CD4-positive, alpha-beta memory T cell (primary cell): ENCODE measurements at regions of chr17 and their contacts with region 1.

Region 1: DNA sequence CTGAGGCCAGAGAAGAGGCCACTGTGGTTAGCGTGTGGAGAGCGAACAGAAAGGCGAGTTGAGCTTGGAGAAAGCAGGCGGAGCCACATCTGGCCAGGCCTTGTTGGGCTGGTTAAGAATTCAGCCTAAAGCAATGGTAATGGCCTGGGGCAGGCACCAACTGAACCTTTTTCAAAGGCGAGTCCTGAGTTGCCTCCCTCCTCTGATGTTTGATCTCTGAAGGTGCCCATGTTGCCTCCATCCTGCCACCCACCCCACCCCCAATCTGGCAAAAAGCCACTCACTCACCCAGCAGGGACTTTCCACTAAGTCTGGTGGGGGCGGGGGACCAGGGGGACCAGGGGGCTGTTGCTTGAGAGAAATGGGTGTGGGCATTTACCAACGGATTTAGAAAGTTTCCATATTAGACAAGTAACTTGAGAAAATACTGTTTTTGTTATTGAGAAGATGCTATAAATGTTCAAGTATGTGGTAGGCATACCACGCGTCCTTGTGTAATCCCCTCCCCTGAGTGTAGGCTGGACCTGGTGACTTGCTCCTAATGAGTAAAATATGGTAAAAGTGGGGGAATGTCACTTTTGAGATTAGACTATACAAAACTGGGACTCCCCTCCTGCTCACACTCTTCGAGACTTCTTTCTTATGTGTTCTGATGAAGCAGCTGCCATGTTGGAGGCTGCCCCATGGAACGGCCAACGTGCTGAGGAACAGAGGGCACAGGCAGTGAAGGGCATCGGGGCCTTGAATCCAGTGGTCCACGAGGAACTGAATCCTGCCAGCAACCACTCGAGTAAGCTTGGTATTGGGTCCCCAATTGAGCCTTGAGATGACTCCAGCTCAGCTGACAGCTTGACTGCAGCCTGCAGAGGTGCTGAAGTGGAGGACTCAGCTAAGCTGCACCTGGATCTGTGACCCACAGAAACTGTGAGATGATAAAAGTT is 29.9 kb upstream of the TNS4 start:
- DNase-seq: peak; percentile 53 to 85 (median 58)
- H3K4me3 ChIP-seq: no peak overlapping the region
- H3K4me3 Mint-ChIP-seq: peak overlapping the region in 7 of 8 donors; percentile 27 to 75 (median 37)
- H3K27ac ChIP-seq: no peak overlapping the region
- H3K27ac Mint-ChIP-seq: peak overlapping the region; percentile 78 to 100 (median 84)
- H3K4me1 ChIP-seq: peaks cover 77% of the 10 kb centered on the region
- H3K4me1 Mint-ChIP-seq: peaks cover 57 to 82% (median 65%) of the 10 kb centered on the region in 4 donors
- H3K27me3 ChIP-seq: no peaks in the 10 kb centered on the region
- H3K27me3 Mint-ChIP-seq: peaks cover 0 to 2% of the 10 kb centered on the region in 2 donors

Region 2: DNA sequence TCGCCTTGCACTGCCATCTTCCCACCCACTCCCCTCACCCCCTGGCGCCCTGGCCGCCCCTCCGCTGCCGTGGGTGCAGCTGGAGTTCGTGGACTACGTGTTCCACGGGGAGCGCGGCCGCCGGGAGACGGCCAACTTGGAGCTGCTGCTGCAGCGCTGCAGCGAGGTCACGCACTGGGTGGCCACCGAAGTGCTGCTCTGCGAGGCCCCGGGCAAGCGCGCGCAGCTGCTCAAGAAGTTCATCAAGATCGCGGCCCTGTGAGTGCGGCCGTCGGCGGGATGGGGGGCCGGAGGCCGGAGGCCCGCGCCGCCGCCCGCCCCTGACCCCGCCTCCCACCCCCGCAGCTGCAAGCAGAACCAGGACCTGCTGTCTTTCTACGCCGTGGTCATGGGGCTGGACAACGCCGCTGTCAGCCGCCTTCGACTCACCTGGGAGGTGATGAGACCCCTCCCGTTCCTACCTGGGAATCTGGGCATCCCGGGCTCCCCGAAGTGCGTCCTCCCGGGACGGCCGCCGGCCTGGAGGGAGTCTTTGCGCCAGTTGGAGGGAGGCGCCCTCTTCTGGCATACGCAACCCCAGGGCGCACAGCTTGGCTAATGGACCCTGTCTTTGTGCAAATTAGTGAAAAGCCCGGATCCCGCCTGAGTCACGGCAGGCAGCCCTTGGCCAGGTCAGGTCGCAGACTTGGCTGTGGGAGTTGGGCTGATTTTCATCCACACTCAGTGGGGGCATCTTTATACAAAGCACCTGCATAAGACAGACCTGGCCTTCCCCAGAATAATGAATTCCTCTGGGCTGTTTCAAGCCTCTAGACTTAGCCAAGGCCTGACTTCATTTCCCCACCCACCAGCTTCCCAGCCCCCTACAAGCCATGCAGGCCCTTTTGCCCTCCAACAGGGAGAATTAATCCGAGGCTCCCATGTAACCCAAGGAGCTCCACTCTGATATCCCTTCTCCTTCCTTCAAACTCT is 339.8 kb before region 1 on chr17:
- CTCF ChIA-PET with region 1: no interaction called
- POLR2A ChIA-PET with region 1: no interaction called
- intact Hi-C with region 1: no loop called
- DNase-seq: peak; percentile 52 to 67 (median 56)
- H3K4me3 ChIP-seq: peak overlapping the region; percentile 46 to 52
- H3K4me3 Mint-ChIP-seq: peak overlapping the region; percentile 90 to 96 (median 92)
- H3K27ac ChIP-seq: no peak overlapping the region
- H3K27ac Mint-ChIP-seq: peak overlapping the region in 5 of 7 donors; percentile 24 to 84 (median 82)
- H3K4me1 ChIP-seq: peaks cover 6% of the 10 kb centered on the region
- H3K4me1 Mint-ChIP-seq: peaks cover 0 to 11% (median 7%) of the 10 kb centered on the region in 4 donors
- H3K27me3 ChIP-seq: no peaks in the 10 kb centered on the region
- H3K27me3 Mint-ChIP-seq: no peaks in the 10 kb centered on the region

Region 3: GRCh38 chr17:40317880-40318829 is 213.2 kb before region 1 on chr17:
- CTCF ChIA-PET with region 1: no interaction called
- POLR2A ChIA-PET with region 1: interaction called, 12 read pairs
- intact Hi-C with region 1: no loop called
- DNase-seq: peak; percentile 89 to 93 (median 91)
- H3K4me3 ChIP-seq: peak overlapping the region; percentile 80 to 91
- H3K4me3 Mint-ChIP-seq: peak overlapping the region; percentile 91 to 98 (median 96)
- H3K27ac ChIP-seq: peak overlapping the region; percentile 99
- H3K27ac Mint-ChIP-seq: peak overlapping the region; percentile 96 to 100 (median 99)
- H3K4me1 ChIP-seq: peaks cover 74% of the 10 kb centered on the region
- H3K4me1 Mint-ChIP-seq: peaks cover 42 to 95% (median 61%) of the 10 kb centered on the region in 4 donors
- H3K27me3 ChIP-seq: no peaks in the 10 kb centered on the region
- H3K27me3 Mint-ChIP-seq: peaks cover 1 to 3% of the 10 kb centered on the region in 2 donors

Region 4: GRCh38 chr17:40417609-40418427 is 113.5 kb before region 1 on chr17 and contains the start of gene TOP2A:
- CTCF ChIA-PET with region 1: interaction called, 17 read pairs
- POLR2A ChIA-PET with region 1: interaction called, 61 read pairs
- intact Hi-C with region 1: loop called (anchors 1 kb)
- DNase-seq: peak; percentile 98 to 99 (median 98)
- H3K4me3 ChIP-seq: peak within 1 kb of the TSS; percentile 77 to 91
- H3K4me3 Mint-ChIP-seq: peak within 1 kb of the TSS; percentile 90 to 97 (median 95)
- H3K27ac ChIP-seq: peak within 1 kb of the TSS; percentile 49
- H3K27ac Mint-ChIP-seq: peak within 1 kb of the TSS; percentile 69 to 97 (median 93)
- H3K4me1 ChIP-seq: peaks cover 37% of the 10 kb centered on the region
- H3K4me1 Mint-ChIP-seq: peaks cover 15 to 35% (median 28%) of the 10 kb centered on the region in 4 donors
- H3K27me3 ChIP-seq: no peaks in the 10 kb centered on the region
- H3K27me3 Mint-ChIP-seq: no peaks in the 10 kb centered on the region
- total RNA-seq, gene TOP2A: 0.47 to 1.1 TPM

Region 5: GRCh38 chr17:40480501-40481003 is 50.8 kb before region 1 on chr17:
- CTCF ChIA-PET with region 1: interaction called, 117 read pairs
- POLR2A ChIA-PET with region 1: interaction called, 192 read pairs
- intact Hi-C with region 1: loop called (anchors 1 kb)
- DNase-seq: peak; percentile 92 to 96 (median 95)
- H3K4me3 ChIP-seq: peak overlapping the region in 1 of 2 donors; percentile 26
- H3K4me3 Mint-ChIP-seq: peak overlapping the region; percentile 49 to 78 (median 73)
- H3K27ac ChIP-seq: peak overlapping the region; percentile 83
- H3K27ac Mint-ChIP-seq: peak overlapping the region; percentile 97 to 100 (median 99)
- H3K4me1 ChIP-seq: peaks cover 91% of the 10 kb centered on the region
- H3K4me1 Mint-ChIP-seq: peaks cover 31 to 83% (median 55%) of the 10 kb centered on the region in 4 donors
- H3K27me3 ChIP-seq: no peaks in the 10 kb centered on the region
- H3K27me3 Mint-ChIP-seq: no peaks in the 10 kb centered on the region

Region 6: GRCh38 chr17:40516581-40517285 is 14.6 kb before region 1 on chr17:
- CTCF ChIA-PET with region 1: interaction called, 46 read pairs
- POLR2A ChIA-PET with region 1: interaction called, 99 read pairs
- intact Hi-C with region 1: loop called (anchors 1 kb)
- DNase-seq: peak; percentile 84 to 90 (median 87)
- H3K4me3 ChIP-seq: peak overlapping the region; percentile 51 to 70
- H3K4me3 Mint-ChIP-seq: peak overlapping the region; percentile 76 to 91 (median 84)
- H3K27ac ChIP-seq: peak overlapping the region; percentile 32
- H3K27ac Mint-ChIP-seq: peak overlapping the region; percentile 89 to 99 (median 96)
- H3K4me1 ChIP-seq: peaks cover 77% of the 10 kb centered on the region
- H3K4me1 Mint-ChIP-seq: peaks cover 51 to 76% (median 61%) of the 10 kb centered on the region in 4 donors
- H3K27me3 ChIP-seq: no peaks in the 10 kb centered on the region
- H3K27me3 Mint-ChIP-seq: peaks cover 0 to 2% of the 10 kb centered on the region in 2 donors

Region 7: DNA sequence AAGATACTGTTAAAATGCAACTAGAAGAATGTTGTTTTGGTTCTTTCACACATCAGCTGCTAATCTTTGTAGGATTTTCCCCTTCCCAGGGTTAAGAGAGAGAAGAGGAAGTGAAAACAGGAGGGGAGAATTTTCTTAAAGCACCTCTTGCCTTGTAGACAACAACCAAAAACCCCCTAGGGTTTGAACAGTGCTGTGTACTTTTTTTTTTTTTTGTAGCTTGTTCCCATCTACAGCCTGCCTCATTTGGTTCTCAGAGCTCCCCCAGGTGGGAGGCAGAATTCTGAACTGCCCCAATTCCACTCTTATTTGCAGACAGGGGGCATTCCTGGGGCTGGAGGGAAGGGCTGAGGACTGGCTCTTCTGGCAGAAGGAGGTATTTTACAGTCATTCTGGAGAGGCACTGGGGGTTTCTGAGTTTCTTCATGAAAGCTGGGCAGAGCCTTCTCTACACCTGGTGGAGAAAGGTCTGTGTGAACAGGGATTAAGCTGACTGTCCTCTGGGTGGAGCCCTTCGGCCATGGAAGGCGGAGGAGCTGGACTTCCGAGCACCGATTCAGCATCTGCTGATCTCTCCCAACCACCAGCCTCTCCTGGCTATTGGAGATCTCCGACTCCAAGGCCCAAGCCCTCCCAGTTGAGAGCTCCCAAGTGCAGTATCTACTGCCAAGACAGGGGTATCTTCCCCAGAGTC is 84.1 kb after region 1 on chr17:
- CTCF ChIA-PET with region 1: interaction called, 43 read pairs
- POLR2A ChIA-PET with region 1: interaction called, 33 read pairs
- intact Hi-C with region 1: no loop called
- DNase-seq: peak in 4 of 5 donors; percentile 53 to 70 (median 56)
- H3K4me3 ChIP-seq: no peak overlapping the region
- H3K4me3 Mint-ChIP-seq: peak overlapping the region; percentile 41 to 83 (median 70)
- H3K27ac ChIP-seq: peak overlapping the region; percentile 66
- H3K27ac Mint-ChIP-seq: peak overlapping the region; percentile 86 to 97 (median 96)
- H3K4me1 ChIP-seq: peaks cover 76% of the 10 kb centered on the region
- H3K4me1 Mint-ChIP-seq: peaks cover 45 to 76% (median 66%) of the 10 kb centered on the region in 4 donors
- H3K27me3 ChIP-seq: no peaks in the 10 kb centered on the region
- H3K27me3 Mint-ChIP-seq: no peaks in the 10 kb centered on the region